CD8-positive, alpha-beta memory T cell (primary cell): ENCODE measurements at regions of chrX and their contacts with region 1.

Region 1: DNA sequence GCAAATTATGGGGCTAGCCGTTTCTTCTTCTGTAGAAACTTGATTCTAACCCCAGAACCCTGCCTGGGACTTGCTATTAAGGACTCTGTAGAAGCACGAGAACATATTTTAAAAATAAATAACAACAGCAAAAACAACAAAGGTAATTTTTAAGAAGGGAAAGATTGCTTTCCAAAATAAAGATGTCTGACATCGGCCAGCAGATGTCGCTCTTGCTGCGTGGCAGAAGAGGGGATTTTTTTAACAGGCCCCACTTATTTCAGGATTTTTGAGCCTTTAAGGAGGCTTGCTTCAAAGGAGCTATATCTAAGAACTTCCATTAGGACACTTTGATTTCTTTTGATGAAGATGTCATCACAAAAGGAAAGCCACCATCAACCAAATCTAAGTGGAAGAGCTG is 62.8 kb upstream of the EGFL6 start:
- DNase-seq: peak; percentile 28 to 60 (median 35)
- H3K4me3 ChIP-seq: no peak overlapping the region
- H3K4me3 Mint-ChIP-seq: no peak overlapping the region
- H3K27ac ChIP-seq: no peak overlapping the region
- H3K27ac Mint-ChIP-seq: peak overlapping the region in 1 of 8 donors; percentile 77
- H3K4me1 ChIP-seq: no peaks in the 10 kb centered on the region
- H3K4me1 Mint-ChIP-seq: no peaks in the 10 kb centered on the region
- H3K27me3 ChIP-seq: no peaks in the 10 kb centered on the region
- H3K27me3 Mint-ChIP-seq: peaks cover 0 to 13% of the 10 kb centered on the region in 2 donors

Region 2: DNA sequence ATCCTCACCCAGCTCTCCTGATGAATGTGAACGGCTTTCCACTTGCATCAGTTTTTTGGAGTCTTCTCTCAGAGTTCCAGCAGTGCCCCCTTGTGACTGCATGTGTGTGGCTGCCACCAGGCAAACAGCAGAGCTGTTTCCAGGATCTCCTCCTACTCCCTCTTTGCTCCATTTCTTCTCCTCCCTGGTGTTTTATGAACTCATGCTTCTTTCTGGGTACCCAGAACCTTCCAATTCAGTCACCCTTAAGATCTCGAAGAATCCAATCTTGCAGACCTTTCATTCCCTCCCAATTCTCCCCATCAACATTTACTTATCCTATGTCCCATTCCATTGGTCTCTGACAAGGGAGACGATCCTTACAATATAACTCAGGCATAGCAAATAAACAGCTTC is 139.6 kb after region 1 on chrX:
- CTCF ChIA-PET with region 1: interaction called, 12 read pairs
- POLR2A ChIA-PET with region 1: no interaction called
- DNase-seq: peak in 2 of 5 donors; percentile 8 to 52
- H3K4me3 ChIP-seq: no peak overlapping the region
- H3K4me3 Mint-ChIP-seq: no peak overlapping the region
- H3K27ac ChIP-seq: no peak overlapping the region
- H3K27ac Mint-ChIP-seq: peak overlapping the region in 3 of 8 donors; percentile 17 to 50 (median 47)
- H3K4me1 ChIP-seq: no peaks in the 10 kb centered on the region
- H3K4me1 Mint-ChIP-seq: peaks cover 13 to 22% (median 13%) of the 10 kb centered on the region in 3 donors
- H3K27me3 ChIP-seq: no peaks in the 10 kb centered on the region
- H3K27me3 Mint-ChIP-seq: peaks cover 0 to 29% of the 10 kb centered on the region in 2 donors

Region 3: GRCh38 chrX:14029425-14030173 is 523.0 kb after region 1 on chrX and contains the start of gene GEMIN8:
- CTCF ChIA-PET with region 1: interaction called, 19 read pairs
- POLR2A ChIA-PET with region 1: interaction called, 3 read pairs
- DNase-seq: peak; percentile 77 to 93 (median 91)
- H3K4me3 ChIP-seq: peak within 1 kb of the TSS; percentile 62
- H3K4me3 Mint-ChIP-seq: peak within 1 kb of the TSS; percentile 90 to 98 (median 96)
- H3K27ac ChIP-seq: peak within 1 kb of the TSS; percentile 88
- H3K27ac Mint-ChIP-seq: peak within 1 kb of the TSS; percentile 98 to 100 (median 100)
- H3K4me1 ChIP-seq: peaks cover 34% of the 10 kb centered on the region
- H3K4me1 Mint-ChIP-seq: peaks cover 42 to 47% (median 47%) of the 10 kb centered on the region in 3 donors
- H3K27me3 ChIP-seq: no peaks in the 10 kb centered on the region
- H3K27me3 Mint-ChIP-seq: peaks cover 6 to 9% of the 10 kb centered on the region in 2 donors
- total RNA-seq, gene GEMIN8: 10.4 to 13.3 TPM